Ascending aorta (tissue), 2 donors: ENCODE measurements at regions of chr2 and their contacts with region 1.

Region 1: DNA sequence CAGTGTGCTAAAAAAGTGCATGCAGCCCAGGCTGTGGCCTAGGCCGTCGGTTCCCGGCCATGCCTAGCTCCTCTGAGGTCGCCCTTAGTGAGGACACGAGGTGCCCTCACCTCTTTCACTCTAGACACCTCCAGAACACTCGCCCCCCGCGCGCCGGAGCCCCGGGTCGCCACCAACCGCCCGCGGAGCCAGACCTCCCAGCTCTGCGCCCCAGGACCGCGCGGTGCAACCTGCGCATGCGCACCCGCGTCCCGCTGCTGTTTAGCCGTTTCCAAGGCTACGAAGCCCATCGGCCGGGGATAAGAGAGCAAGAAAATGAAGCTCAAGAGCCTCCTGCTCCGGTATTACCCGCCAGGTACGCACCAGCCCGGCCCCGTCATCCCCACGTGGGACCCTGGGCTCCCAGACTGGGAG is at the start of gene DAW1:
- DNase-seq: peak in 1 of 2 donors; percentile 81
- H3K4me3 ChIP-seq: peak within 1 kb of the TSS; percentile 40 to 65
- H3K27ac ChIP-seq: peak within 1 kb of the TSS; percentile 65 to 66
- H3K4me1 ChIP-seq: peaks cover 7 to 17% of the 10 kb centered on the region in 2 donors
- H3K27me3 ChIP-seq: no peaks in the 10 kb centered on the region
- CTCF ChIP-seq: no peak
- total RNA-seq, gene DAW1: not detected

Region 2: GRCh38 chr2:227471924-227472264 is 399.5 kb before region 1 on chr2 and contains the start of gene AGFG1:
- intact Hi-C with region 1: loop called (anchors 10 kb)
- DNase-seq: peak; percentile 40 to 92
- H3K4me3 ChIP-seq: peak within 1 kb of the TSS; percentile 95 to 97
- H3K27ac ChIP-seq: peak within 1 kb of the TSS; percentile 92 to 97
- H3K4me1 ChIP-seq: peaks cover 0 to 22% of the 10 kb centered on the region in 2 donors
- H3K27me3 ChIP-seq: no peaks in the 10 kb centered on the region
- CTCF ChIP-seq: peak; percentile 96 to 99 (median 99)
- total RNA-seq, gene AGFG1: 25.5 TPM

Region 3: GRCh38 chr2:228768818-228769217 is 897.4 kb after region 1 on chr2:
- intact Hi-C with region 1: loop called (anchors 10 kb)
- DNase-seq: no peak
- H3K4me3 ChIP-seq: no peak overlapping the region
- H3K27ac ChIP-seq: peak overlapping the region in 1 of 2 donors; percentile 47
- H3K4me1 ChIP-seq: peaks cover 0 to 12% of the 10 kb centered on the region in 2 donors
- H3K27me3 ChIP-seq: no peaks in the 10 kb centered on the region
- CTCF ChIP-seq: no peak

Region 4: DNA sequence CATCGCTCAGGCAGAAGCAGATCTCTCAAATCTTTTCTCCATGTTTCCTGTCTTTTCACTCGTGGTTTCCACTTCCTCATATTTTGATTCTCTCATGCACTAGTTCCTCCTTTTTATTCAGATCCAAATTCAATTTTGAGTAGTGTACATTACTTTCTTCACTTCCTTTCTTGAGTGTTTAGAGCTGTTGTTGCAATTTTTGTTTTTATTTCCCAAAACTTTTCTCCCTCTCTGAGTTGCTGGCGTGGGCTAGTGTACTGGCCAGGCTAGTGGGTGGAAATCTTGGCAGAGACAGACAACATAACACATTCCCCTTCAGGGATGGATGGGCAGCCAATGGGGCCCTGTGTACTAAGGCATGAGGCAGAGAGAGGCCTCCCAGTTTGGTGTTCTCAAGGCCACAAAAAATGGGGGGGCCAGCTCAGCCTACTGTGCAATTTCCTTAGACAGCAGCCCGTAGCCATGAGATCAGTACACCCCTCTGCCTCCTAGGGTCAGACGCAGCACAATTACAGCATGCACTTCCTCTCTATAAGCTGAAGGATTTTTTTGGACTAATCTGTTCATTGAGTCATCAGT is 1544.8 kb after region 1 on chr2:
- intact Hi-C with region 1: loop called (anchors 10 kb)
- DNase-seq: peak; percentile 39 to 92
- H3K4me3 ChIP-seq: no peak overlapping the region
- H3K27ac ChIP-seq: peak overlapping the region; percentile 90
- H3K4me1 ChIP-seq: peaks cover 17 to 60% of the 10 kb centered on the region in 2 donors
- H3K27me3 ChIP-seq: no peaks in the 10 kb centered on the region
- CTCF ChIP-seq: no peak